ENCODE measurements at regions of chr16 and their contacts with region 1.

Region 1: GRCh38 chr16:87636072-87636684 is 33.9 kb downstream of the JPH3 start:
- DNase-seq: peak; percentile 76
- ATAC-seq: peak; percentile 90
- H3K4me3 ChIP-seq: peak overlapping the region; percentile 44 to 56
- H3K27ac ChIP-seq: peak overlapping the region; percentile 16; the same call in 1 of the 2 replicates
- H3K4me1 ChIP-seq: peaks cover 10 to 18% of the 10 kb centered on the region in 2 experiments
- H3K27me3 ChIP-seq: peaks cover 19% of the 10 kb centered on the region
- CTCF ChIP-seq: peak; percentile 73 to 94 (median 83)
- POLR2A ChIP-seq: no peak
- RAD21 ChIP-seq: peak; percentile 97

Region 2: GRCh38 chr16:87203060-87203656 is 433.0 kb before region 1 on chr16:
- CTCF ChIA-PET with region 1: interaction called, 4 read pairs
- POLR2A ChIA-PET with region 1: no interaction called
- RAD21 ChIA-PET with region 1: no interaction called
- intact Hi-C with region 1: loop called (anchors 5 kb)
- DNase-seq: peak; percentile 85
- ATAC-seq: peak; percentile 99
- H3K4me3 ChIP-seq: peak overlapping the region in 1 of 2 experiments; percentile 1; a peak in 1 of 4 replicates
- H3K27ac ChIP-seq: no peak overlapping the region
- H3K4me1 ChIP-seq: peaks cover 2 to 27% of the 10 kb centered on the region in 2 experiments; a peak in 3 of 4 replicates
- H3K27me3 ChIP-seq: no peaks in the 10 kb centered on the region
- CTCF ChIP-seq: peak; percentile 96 to 100 (median 100)
- POLR2A ChIP-seq: no peak
- RAD21 ChIP-seq: peak; percentile 88

Region 3: GRCh38 chr16:87387942-87388817 is 248.0 kb before region 1 on chr16:
- CTCF ChIA-PET with region 1: interaction called, 10 read pairs
- POLR2A ChIA-PET with region 1: interaction called, 4 read pairs
- RAD21 ChIA-PET with region 1: interaction called in 1 of 2 experiments, 6 read pairs
- intact Hi-C with region 1: no loop called
- DNase-seq: peak; percentile 100
- ATAC-seq: peak; percentile 67
- H3K4me3 ChIP-seq: no peak overlapping the region; a peak in 1 of 4 replicates
- H3K27ac ChIP-seq: peak overlapping the region; percentile 47
- H3K4me1 ChIP-seq: peaks cover 37 to 52% of the 10 kb centered on the region in 2 experiments
- H3K27me3 ChIP-seq: no peaks in the 10 kb centered on the region
- CTCF ChIP-seq: no peak
- POLR2A ChIP-seq: no peak
- RAD21 ChIP-seq: no peak

Region 4: GRCh38 chr16:87416826-87417527 is 219.2 kb before region 1 on chr16:
- CTCF ChIA-PET with region 1: interaction called, 61 read pairs
- POLR2A ChIA-PET with region 1: interaction called, 3 read pairs
- RAD21 ChIA-PET with region 1: interaction called, 7 to 10 read pairs
- intact Hi-C with region 1: loop called (anchors 1 kb)
- DNase-seq: no peak
- ATAC-seq: no peak
- H3K4me3 ChIP-seq: no peak overlapping the region
- H3K27ac ChIP-seq: no peak overlapping the region
- H3K4me1 ChIP-seq: no peaks in the 10 kb centered on the region
- H3K27me3 ChIP-seq: no peaks in the 10 kb centered on the region
- CTCF ChIP-seq: peak; percentile 70 to 87 (median 76)
- POLR2A ChIP-seq: no peak
- RAD21 ChIP-seq: peak; percentile 78

Region 5: DNA sequence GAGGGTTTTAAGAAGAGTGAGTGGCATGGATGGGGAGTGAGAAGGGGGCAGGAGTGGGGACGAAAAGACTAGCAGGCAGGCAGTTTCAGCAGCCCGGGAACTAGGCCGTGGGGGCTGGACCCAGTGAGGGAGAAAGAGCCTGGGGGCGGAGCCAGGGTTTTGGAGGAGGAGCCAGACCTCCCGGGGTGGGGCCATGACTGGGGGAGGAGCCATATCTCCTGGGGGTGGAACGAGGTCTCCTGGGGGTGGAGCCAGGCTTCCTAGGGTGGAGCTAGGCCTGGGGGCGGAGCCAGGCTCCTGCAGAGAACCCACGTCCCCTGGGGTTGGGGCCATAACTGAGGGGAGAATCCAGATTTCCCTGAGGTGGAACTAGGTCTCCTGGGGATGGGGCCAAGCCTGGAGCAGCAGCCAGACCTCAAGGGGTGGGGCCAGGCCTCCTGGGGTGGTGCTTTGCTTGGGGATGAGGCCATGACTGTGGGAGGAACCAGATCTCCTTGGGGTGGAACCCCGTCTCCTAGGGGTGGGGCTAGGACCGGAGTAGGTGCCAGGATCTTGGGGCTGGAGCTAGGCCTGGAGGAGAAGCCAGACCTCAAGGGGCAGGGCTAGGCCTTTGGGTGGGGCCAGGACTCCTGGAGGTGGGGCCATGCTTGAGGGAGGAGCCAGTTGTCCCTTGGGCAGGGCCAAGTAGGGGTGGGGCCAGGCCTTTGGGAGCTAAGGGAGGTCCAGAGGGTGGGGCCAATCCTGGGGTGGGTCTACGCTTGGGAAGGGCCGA is 75.6 kb before region 1 on chr16:
- CTCF ChIA-PET with region 1: interaction called, 11 read pairs
- POLR2A ChIA-PET with region 1: no interaction called
- RAD21 ChIA-PET with region 1: no interaction called
- intact Hi-C with region 1: no loop called
- DNase-seq: peak; percentile 93
- ATAC-seq: peak; percentile 96
- H3K4me3 ChIP-seq: no peak overlapping the region
- H3K27ac ChIP-seq: peak overlapping the region; percentile 51; the same call in 1 of the 2 replicates
- H3K4me1 ChIP-seq: peaks cover 4 to 13% of the 10 kb centered on the region in 2 experiments; a peak in 3 of 4 replicates
- H3K27me3 ChIP-seq: no peaks in the 10 kb centered on the region
- CTCF ChIP-seq: no peak
- POLR2A ChIP-seq: no peak
- RAD21 ChIP-seq: no peak

Region 6: DNA sequence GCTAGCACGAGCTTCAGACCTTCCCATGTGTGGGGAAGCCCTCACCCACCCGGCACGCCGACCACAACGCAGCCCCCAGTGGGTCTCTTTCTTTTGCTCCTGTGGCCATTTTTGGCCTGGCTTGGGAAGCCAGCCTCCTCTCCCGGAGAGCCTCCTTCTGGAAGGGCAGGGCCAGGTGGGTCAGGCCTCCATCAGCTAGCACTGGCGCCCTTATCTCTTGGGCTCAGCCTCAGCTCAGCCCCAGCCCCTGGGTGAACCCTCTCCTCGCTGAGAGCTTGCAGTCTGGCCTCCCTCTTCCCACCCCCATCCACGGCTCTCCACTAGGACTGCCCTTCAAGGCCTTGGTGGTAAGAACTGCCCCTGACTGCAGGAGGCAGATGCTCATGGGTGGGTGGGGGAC is 48.5 kb before region 1 on chr16:
- CTCF ChIA-PET with region 1: interaction called, 38 read pairs
- POLR2A ChIA-PET with region 1: no interaction called
- RAD21 ChIA-PET with region 1: interaction called, 8 to 18 read pairs
- intact Hi-C with region 1: loop called (anchors 1 kb)
- DNase-seq: no peak
- ATAC-seq: no peak
- H3K4me3 ChIP-seq: no peak overlapping the region
- H3K27ac ChIP-seq: no peak overlapping the region
- H3K4me1 ChIP-seq: peaks cover 0 to 2% of the 10 kb centered on the region in 2 experiments; a peak in 2 of 4 replicates
- H3K27me3 ChIP-seq: peaks cover 31% of the 10 kb centered on the region
- CTCF ChIP-seq: no peak
- POLR2A ChIP-seq: no peak
- RAD21 ChIP-seq: no peak

Region 7: DNA sequence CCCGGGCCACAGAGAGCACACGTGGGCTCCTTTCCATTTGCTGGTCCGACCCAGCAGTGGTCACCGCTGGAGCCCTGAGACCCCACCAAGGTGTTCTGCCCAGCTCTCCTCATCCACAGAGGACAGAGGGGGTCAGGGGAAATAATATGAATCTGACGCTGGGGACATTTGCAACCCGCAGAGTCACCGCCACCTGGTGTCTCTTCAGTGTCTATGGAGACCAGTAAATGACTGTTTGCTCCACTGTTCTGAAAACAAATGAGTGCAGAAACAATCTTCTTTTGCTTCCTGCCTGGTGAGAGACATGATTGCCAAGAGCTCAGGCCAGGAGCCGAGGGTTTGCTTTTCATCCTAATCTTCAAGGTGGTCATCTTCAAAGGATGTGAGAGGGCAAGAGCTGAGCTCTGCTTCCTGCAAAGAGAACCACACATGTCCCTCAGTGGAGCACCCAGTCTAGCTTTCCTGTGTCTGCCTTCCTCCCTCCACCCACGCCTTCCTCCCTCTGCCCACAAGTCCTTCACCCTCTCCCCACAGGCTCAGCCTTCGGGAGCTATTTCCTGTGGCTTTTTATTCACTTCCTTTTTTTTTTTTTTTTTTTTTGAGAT is 144.3 kb after region 1 on chr16:
- CTCF ChIA-PET with region 1: no interaction called
- POLR2A ChIA-PET with region 1: no interaction called
- RAD21 ChIA-PET with region 1: no interaction called
- intact Hi-C with region 1: no loop called
- DNase-seq: no peak
- ATAC-seq: no peak
- H3K4me3 ChIP-seq: no peak overlapping the region
- H3K27ac ChIP-seq: no peak overlapping the region; the same call in 1 of the 2 replicates
- H3K4me1 ChIP-seq: peaks cover 14 to 48% of the 10 kb centered on the region in 2 experiments; a peak in 3 of 4 replicates
- H3K27me3 ChIP-seq: no peaks in the 10 kb centered on the region
- CTCF ChIP-seq: no peak
- POLR2A ChIP-seq: no peak
- RAD21 ChIP-seq: no peak